Common myeloid progenitor, CD34-positive (primary cell): ENCODE measurements at regions of chr13 and their contacts with region 1.

Region 1: DNA sequence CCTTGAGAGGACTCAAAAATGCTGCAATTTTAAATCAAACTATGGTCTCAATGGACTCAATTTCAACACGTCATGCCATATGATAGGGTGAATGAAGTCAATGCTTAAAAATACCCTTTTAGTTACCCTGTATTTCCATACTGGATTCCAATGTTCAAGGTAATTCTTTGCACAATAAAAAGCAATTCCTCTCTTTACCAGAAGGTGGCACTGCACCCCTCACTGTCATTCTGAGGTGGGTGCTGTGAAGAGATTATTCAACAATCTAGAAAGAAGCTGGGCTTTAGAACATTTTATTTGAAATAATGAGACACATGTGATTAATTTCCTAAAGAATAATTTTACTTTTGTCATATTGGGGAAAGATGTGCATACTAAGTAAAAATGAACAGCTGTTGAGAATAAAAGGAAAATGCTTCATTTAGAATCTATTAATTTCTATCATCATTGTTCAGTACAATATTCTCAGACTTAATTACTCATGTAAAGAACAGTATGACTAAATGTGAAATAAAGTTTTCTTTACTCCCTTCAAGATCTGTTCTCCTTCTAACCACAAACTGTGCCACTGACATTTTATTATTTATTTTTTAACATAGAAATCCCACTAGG is 789.1 kb downstream of the GPC5 start:
- DNase-seq: peak; percentile 23 to 55 (median 47)
- H3K4me3 ChIP-seq: no peak overlapping the region
- H3K27ac ChIP-seq: no peak overlapping the region
- H3K4me1 ChIP-seq: no peaks in the 10 kb centered on the region
- H3K27me3 ChIP-seq: no peaks in the 10 kb centered on the region

Region 2: DNA sequence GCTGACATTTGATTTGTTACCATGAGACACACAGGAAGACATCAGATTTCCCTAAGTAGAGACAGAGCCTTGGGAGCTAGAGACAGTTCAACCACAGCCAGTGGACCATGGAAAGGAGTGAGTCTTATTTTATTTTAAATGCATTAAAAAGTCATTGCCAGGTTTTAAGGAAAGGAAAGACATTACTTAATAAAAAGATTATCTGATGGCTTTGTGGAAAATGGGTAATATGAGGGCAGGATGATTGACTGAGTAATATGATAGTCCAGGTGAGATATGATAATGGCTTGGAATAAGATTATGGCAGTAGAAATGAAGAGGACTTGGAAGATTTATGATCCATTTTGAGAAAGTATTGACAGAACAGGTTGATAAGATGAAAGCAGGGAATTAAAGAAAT is 208.9 kb before region 1 on chr13:
- CTCF ChIA-PET with region 1: no interaction called
- POLR2A ChIA-PET with region 1: no interaction called
- DNase-seq: no peak
- H3K4me3 ChIP-seq: no peak overlapping the region
- H3K27ac ChIP-seq: no peak overlapping the region
- H3K4me1 ChIP-seq: no peaks in the 10 kb centered on the region
- H3K27me3 ChIP-seq: no peaks in the 10 kb centered on the region

Region 3: DNA sequence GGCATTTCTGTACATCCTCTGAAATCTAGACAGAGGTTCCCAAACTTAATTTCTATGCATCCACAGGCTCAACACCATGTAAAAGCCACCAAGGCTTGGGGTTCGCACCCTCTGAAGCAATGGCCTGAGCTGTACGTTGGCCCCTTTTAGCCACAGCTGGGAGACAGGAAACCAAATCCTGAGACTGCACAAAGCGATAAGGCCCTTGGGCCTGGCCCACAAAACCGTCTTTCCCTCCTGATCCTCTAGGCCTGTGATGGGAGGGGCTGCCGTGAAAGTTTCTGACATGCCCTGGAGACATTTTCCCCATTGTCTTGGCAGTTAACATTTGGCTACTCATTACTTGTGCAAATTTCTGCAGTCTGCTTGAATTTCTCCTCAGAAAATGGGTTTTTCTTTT is 22.7 kb before region 1 on chr13:
- CTCF ChIA-PET with region 1: no interaction called
- POLR2A ChIA-PET with region 1: no interaction called
- DNase-seq: peak; percentile 54 to 69 (median 56)
- H3K4me3 ChIP-seq: no peak overlapping the region
- H3K27ac ChIP-seq: no peak overlapping the region
- H3K4me1 ChIP-seq: no peaks in the 10 kb centered on the region
- H3K27me3 ChIP-seq: no peaks in the 10 kb centered on the region

Region 4: DNA sequence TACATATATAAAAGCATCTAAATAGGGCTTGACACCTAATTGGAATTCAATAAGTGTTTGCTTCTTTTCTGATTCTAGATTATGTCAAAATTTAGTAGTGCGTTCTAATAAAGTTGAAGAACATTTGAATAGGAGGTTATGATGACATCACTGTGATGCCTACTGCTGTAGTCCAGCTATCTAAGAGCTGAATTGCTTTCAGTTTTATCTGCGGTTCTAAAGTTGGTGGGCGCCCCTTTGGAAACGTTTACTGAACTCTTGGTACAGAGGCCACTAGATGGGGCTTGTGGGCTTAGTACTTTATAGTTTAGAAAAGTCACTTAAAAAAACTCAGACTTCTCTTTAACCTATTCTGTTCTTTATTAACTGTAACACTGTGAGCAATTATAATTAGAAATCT is 12.2 kb before region 1 on chr13:
- CTCF ChIA-PET with region 1: interaction called, 10 read pairs
- POLR2A ChIA-PET with region 1: no interaction called
- DNase-seq: peak; percentile 81 to 92 (median 89)
- H3K4me3 ChIP-seq: no peak overlapping the region
- H3K27ac ChIP-seq: no peak overlapping the region
- H3K4me1 ChIP-seq: no peaks in the 10 kb centered on the region
- H3K27me3 ChIP-seq: no peaks in the 10 kb centered on the region

Region 5: DNA sequence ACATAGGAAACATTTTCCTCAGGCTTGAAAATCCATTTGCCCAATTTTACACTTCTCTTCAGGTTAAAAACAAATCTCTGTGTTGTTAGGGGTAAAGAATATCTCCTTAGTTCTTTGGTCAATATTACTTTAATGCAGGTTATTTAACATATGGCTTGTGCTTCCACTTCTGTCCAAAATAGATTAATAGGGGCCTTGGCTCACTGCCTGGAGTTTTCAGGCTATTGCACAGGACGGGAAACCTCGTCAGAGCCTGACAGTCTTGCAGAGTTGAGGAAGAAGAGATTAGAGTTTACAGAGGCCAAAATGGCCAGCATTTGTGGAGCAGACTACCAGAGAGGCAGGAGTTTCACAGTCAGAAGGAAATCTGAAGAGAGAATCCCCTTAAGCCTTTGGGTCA is 175.2 kb after region 1 on chr13:
- CTCF ChIA-PET with region 1: no interaction called
- POLR2A ChIA-PET with region 1: no interaction called
- DNase-seq: no peak
- H3K4me3 ChIP-seq: no peak overlapping the region
- H3K27ac ChIP-seq: no peak overlapping the region
- H3K4me1 ChIP-seq: no peaks in the 10 kb centered on the region
- H3K27me3 ChIP-seq: no peaks in the 10 kb centered on the region